ENCODE measurements at regions of chr16 and their contacts with region 1.

Region 1: GRCh38 chr16:4288148-4288921 is 15.5 kb upstream of the TFAP4 start:
- DNase-seq: peak; percentile 66
- H3K4me3 Mint-ChIP-seq: peak overlapping the region; percentile 23
- H3K27ac Mint-ChIP-seq: peak overlapping the region; percentile 75
- H3K4me1 Mint-ChIP-seq: peaks cover 41% of the 10 kb centered on the region
- H3K27me3 Mint-ChIP-seq: no peaks in the 10 kb centered on the region
- CTCF ChIP-seq: peak; percentile 86

Region 2: GRCh38 chr16:4160658-4161430 is 127.5 kb before region 1 on chr16:
- CTCF ChIA-PET with region 1: no interaction called
- POLR2A ChIA-PET with region 1: no interaction called
- intact Hi-C with region 1: no loop called
- DNase-seq: peak; percentile 17
- H3K4me3 Mint-ChIP-seq: no peak overlapping the region
- H3K27ac Mint-ChIP-seq: no peak overlapping the region
- H3K4me1 Mint-ChIP-seq: no peaks in the 10 kb centered on the region
- H3K27me3 Mint-ChIP-seq: no peaks in the 10 kb centered on the region
- CTCF ChIP-seq: no peak

Region 3: DNA sequence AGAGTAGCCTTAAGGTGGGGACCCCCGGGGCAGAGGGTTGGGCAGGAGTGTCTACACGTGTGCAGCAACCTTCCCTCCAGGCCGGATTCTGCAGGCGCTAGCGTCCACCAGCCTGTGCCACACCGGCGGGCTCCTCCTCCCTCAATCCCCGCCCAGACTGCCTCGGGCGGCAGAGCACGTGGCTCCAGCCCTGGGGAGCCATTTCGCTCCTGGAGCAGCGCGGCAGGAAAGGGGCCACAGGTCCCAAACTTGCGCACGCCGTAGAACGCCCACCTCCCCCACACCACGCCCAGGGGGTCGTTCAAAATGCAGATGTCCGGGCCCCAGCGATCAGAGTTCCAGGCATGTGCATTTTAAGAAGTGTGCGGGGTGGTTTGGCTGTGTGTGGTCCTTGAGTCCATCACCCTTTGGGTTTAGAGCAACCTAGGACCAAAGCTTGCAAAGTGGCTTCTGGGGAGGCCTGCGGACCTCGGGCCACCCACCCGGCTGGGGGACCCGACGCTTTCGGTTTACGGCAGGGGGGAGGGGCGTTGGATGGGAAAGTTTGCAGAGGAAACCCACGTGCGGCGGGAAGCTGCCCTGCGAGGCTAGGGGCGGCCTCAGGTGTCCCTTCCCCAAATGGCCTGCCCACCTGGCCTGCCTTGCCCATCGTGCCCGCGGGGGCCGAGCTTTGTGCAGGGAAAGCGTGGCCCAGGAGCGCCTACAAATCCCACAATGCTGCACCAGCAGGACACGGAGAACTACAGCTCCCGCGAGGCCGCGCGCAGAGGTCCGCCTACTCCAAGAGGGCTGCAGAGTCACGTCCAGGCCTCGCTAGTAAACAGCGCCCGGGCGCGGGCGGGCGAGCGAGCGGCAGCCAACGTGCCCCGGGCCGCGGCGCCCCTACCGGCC is 16.9 kb before region 1 on chr16:
- CTCF ChIA-PET with region 1: interaction called, 20 read pairs
- POLR2A ChIA-PET with region 1: interaction called, 34 read pairs
- intact Hi-C with region 1: no loop called
- DNase-seq: peak; percentile 92
- H3K4me3 Mint-ChIP-seq: peak overlapping the region; percentile 84
- H3K27ac Mint-ChIP-seq: peak overlapping the region; percentile 67
- H3K4me1 Mint-ChIP-seq: peaks cover 5% of the 10 kb centered on the region
- H3K27me3 Mint-ChIP-seq: no peaks in the 10 kb centered on the region
- CTCF ChIP-seq: no peak

Region 4: DNA sequence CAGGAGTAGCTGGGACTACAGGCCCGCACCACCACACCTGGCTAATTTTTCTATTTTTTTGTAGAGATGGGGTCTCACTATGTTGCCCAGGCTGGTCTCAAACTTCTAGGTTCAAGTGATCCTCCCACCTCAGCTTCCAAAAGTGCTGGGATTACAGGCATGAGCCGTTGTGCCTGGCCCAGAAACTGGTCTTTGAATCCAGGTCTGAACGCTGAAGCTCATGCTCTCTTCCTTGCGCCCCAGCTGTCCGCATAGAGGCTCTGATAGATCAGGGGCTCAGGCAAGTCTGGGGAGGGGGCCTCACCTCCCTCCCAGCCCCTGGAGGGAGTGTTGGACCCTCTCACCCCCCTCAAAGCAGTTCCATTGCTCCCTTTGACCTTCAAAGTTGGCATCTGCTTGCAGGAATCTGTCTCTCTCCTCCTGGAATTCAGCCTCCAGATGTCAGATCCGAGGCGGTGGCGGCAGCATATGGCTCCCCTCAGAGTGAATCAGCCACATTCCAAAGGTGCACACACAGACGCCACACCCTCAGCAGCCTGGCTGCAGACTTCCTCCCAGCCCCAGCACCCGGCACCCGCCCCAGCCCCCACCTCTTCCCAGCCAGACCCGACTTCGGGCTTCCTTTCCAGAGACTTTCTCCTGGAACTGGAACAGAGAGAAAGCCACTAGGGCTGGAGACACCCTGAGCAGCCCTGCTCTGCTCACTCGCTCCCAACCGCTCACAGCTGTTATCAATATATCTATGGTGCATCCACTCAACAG is 10.6 kb after region 1 on chr16:
- CTCF ChIA-PET with region 1: interaction called, 30 read pairs
- POLR2A ChIA-PET with region 1: interaction called, 20 read pairs
- intact Hi-C with region 1: loop called (anchors 1 kb)
- DNase-seq: peak; percentile 89
- H3K4me3 Mint-ChIP-seq: peak overlapping the region; percentile 44
- H3K27ac Mint-ChIP-seq: peak overlapping the region; percentile 96
- H3K4me1 Mint-ChIP-seq: peaks cover 14% of the 10 kb centered on the region
- H3K27me3 Mint-ChIP-seq: no peaks in the 10 kb centered on the region
- CTCF ChIP-seq: no peak

Region 5: DNA sequence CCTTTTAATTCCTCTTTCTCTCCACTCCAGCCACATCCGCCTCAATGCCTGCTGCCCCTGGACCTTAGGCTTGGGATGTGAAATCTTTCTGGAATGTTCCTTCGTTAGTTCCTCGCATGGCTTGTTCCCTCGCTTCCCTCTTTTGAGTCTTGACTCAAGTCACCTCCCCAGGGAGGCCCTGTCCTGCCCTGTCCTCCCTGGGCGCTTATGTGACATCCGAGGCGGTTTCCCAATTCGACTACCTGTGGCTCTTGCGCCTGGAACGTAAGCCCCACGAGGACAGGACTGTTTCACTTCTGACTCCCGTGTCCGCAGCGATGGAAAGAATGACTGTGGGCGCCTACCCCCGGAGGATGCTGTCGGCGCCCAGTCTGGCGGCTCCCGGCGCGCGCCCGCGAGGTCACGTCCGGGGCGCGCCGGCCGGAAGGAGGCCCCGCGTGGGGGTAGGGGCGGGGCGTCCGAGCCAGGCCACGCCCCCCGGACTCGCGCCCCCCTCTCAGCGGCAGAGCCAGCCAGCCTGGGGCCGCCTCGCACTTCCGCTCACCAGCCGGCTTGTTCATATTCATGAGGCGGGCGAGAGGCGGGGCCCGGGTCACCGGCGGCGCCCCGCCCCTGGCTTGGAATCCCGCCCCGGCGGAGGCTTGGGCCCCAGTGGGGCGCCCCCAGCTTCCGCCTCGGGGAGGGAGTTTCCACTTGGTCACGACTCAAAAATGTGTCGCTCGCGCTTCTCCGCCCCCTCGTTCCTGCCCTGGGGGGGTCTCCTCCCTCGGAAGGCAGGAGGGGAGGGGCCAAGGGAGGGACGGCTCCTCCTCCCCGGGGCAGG is 19.1 kb after region 1 on chr16:
- CTCF ChIA-PET with region 1: interaction called, 19 read pairs
- POLR2A ChIA-PET with region 1: interaction called, 5 read pairs
- intact Hi-C with region 1: no loop called
- DNase-seq: peak; percentile 95
- H3K4me3 Mint-ChIP-seq: peak overlapping the region; percentile 84
- H3K27ac Mint-ChIP-seq: peak overlapping the region; percentile 92
- H3K4me1 Mint-ChIP-seq: peaks cover 8% of the 10 kb centered on the region
- H3K27me3 Mint-ChIP-seq: no peaks in the 10 kb centered on the region
- CTCF ChIP-seq: no peak

Region 6: GRCh38 chr16:4315186-4316109 is 27.1 kb after region 1 on chr16 and contains the start of gene GLIS2:
- CTCF ChIA-PET with region 1: interaction called, 19 read pairs
- POLR2A ChIA-PET with region 1: interaction called, 3 read pairs
- intact Hi-C with region 1: loop called (anchors 2 kb)
- DNase-seq: peak; percentile 39
- H3K4me3 Mint-ChIP-seq: peak within 1 kb of the TSS; percentile 68
- H3K27ac Mint-ChIP-seq: peak within 1 kb of the TSS; percentile 39
- H3K4me1 Mint-ChIP-seq: peaks cover 6% of the 10 kb centered on the region
- H3K27me3 Mint-ChIP-seq: no peaks in the 10 kb centered on the region
- CTCF ChIP-seq: no peak
- total RNA-seq, gene GLIS2: 14.7 and 15.8 TPM in 2 replicates

Region 7: DNA sequence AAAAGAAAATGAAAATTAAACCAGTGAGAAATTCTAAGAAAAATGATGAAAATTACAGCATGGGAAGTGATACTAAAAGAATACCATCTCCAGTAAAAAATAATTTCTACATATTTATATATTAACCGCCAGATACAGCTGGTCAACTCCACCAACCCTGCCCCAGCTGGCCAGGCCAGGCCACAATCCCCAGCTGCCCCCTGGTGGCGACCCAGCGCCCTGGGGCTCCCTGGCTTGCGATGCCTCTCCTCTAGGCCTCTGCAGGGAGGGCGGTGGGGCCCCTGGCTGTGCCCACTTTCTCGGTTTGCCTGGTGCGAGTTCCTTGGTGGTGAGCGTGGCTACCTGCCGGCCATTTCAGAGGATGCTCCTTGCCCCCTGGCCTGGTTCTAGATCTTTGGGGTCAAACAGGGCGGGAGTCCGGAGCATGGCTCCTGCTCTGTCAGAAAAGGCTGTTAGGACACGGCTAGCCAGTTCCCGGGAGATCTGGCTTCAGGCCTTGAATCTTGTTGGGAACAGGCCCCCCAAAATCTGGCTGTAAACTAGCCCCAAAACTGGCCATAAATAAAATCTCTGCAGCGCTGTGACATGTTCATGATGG is 42.0 kb after region 1 on chr16:
- CTCF ChIA-PET with region 1: interaction called, 94 read pairs
- POLR2A ChIA-PET with region 1: interaction called, 6 read pairs
- intact Hi-C with region 1: loop called (anchors 1 kb)
- DNase-seq: peak; percentile 76
- H3K4me3 Mint-ChIP-seq: no peak overlapping the region
- H3K27ac Mint-ChIP-seq: no peak overlapping the region
- H3K4me1 Mint-ChIP-seq: no peaks in the 10 kb centered on the region
- H3K27me3 Mint-ChIP-seq: no peaks in the 10 kb centered on the region
- CTCF ChIP-seq: peak; percentile 98

Region 8: GRCh38 chr16:4344983-4345835 is 56.9 kb after region 1 on chr16:
- CTCF ChIA-PET with region 1: interaction called, 11 read pairs
- POLR2A ChIA-PET with region 1: no interaction called
- intact Hi-C with region 1: no loop called
- DNase-seq: no peak
- H3K4me3 Mint-ChIP-seq: no peak overlapping the region
- H3K27ac Mint-ChIP-seq: no peak overlapping the region
- H3K4me1 Mint-ChIP-seq: peaks cover 8% of the 10 kb centered on the region
- H3K27me3 Mint-ChIP-seq: no peaks in the 10 kb centered on the region
- CTCF ChIP-seq: no peak